Posterior vena cava (tissue), 2 donors: ENCODE measurements at regions of chr15 and their contacts with region 1.

Region 1: GRCh38 chr15:73982222-73982962 is 9.7 kb downstream of the STOML1 start:
- DNase-seq: peak; percentile 97

Region 2: DNA sequence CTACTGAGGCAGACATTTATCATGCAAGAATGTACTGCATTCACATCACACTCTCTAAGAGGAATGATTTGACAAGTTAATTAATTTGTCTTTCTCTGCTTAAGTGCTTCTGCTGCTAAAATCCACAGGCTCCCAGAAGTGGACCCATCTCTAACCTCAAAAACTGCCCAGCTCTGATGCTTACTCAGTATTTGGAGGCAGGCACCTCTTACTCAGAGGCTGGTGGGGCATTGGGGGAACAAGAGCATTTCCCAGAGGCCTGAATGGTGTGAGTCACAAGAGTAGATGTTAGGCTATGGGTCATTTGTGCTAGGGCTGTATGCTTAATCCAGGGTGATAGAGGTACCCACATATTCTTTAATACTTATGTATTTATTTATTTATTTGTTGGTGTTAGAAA is 579.2 kb before region 1 on chr15:
- intact Hi-C with region 1: no loop called
- DNase-seq: no peak

Region 3: GRCh38 chr15:74307827-74308644 is 325.6 kb after region 1 on chr15:
- intact Hi-C with region 1: loop called in 1 of 2 experiments (anchors 10 kb)
- DNase-seq: no peak